Activated naive CD4-positive, alpha-beta T cell treated with anti-CD3 and anti-CD28 coated beads for 36 hours (primary cell): ENCODE measurements at regions of chr2 and their contacts with region 1.

Region 1: GRCh38 chr2:70887550-70888246 is 48.0 kb upstream of the ATP6V1B1 start:
- DNase-seq: peak; percentile 61
- H3K4me3 Mint-ChIP-seq: peak overlapping the region; percentile 72
- H3K27ac Mint-ChIP-seq: no peak overlapping the region
- H3K4me1 Mint-ChIP-seq: peaks cover 27% of the 10 kb centered on the region
- H3K27me3 Mint-ChIP-seq: peaks cover 79% of the 10 kb centered on the region

Region 2: DNA sequence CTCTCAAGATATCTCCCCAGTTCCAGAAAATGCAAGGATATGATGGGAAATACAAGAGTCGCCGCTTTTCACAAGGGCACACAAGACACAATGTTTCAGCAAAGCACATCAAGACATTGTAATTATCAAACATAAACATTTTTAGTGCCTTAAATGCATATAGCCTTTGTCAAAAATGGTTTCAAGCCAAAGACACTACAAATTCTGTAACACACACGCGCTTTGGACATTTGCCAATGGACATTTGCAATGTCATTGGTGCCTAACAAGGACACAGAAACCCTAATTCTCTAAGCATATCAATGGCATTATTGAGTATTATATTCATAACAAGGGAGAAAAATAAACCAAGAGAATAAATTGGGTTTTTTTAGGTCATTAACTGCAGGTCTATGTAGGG is 135.8 kb before region 1 on chr2:
- CTCF ChIA-PET with region 1: no interaction called
- intact Hi-C with region 1: no loop called
- DNase-seq: no peak
- H3K4me3 Mint-ChIP-seq: no peak overlapping the region
- H3K27ac Mint-ChIP-seq: no peak overlapping the region
- H3K4me1 Mint-ChIP-seq: peaks cover 9% of the 10 kb centered on the region
- H3K27me3 Mint-ChIP-seq: peaks cover 2% of the 10 kb centered on the region

Region 3: GRCh38 chr2:70871398-70872211 is 16.1 kb before region 1 on chr2:
- CTCF ChIA-PET with region 1: interaction called, 21 read pairs
- intact Hi-C with region 1: no loop called
- DNase-seq: peak; percentile 90
- H3K4me3 Mint-ChIP-seq: no peak overlapping the region
- H3K27ac Mint-ChIP-seq: no peak overlapping the region
- H3K4me1 Mint-ChIP-seq: peaks cover 5% of the 10 kb centered on the region
- H3K27me3 Mint-ChIP-seq: peaks cover 32% of the 10 kb centered on the region

Region 4: GRCh38 chr2:70901227-70902066 is 13.7 kb after region 1 on chr2:
- CTCF ChIA-PET with region 1: interaction called, 10 read pairs
- intact Hi-C with region 1: loop called (anchors 1 kb)
- DNase-seq: no peak
- H3K4me3 Mint-ChIP-seq: peak overlapping the region; percentile 55
- H3K27ac Mint-ChIP-seq: no peak overlapping the region
- H3K4me1 Mint-ChIP-seq: peaks cover 38% of the 10 kb centered on the region
- H3K27me3 Mint-ChIP-seq: peaks cover 85% of the 10 kb centered on the region

Region 5: GRCh38 chr2:70907130-70908057 is 19.7 kb after region 1 on chr2:
- CTCF ChIA-PET with region 1: interaction called, 10 read pairs
- intact Hi-C with region 1: loop called (anchors 2 kb)
- DNase-seq: no peak
- H3K4me3 Mint-ChIP-seq: peak overlapping the region; percentile 43
- H3K27ac Mint-ChIP-seq: no peak overlapping the region
- H3K4me1 Mint-ChIP-seq: peaks cover 16% of the 10 kb centered on the region
- H3K27me3 Mint-ChIP-seq: peaks cover 63% of the 10 kb centered on the region